ENCODE measurements at regions of chr12 and their contacts with region 1.

Region 1: DNA sequence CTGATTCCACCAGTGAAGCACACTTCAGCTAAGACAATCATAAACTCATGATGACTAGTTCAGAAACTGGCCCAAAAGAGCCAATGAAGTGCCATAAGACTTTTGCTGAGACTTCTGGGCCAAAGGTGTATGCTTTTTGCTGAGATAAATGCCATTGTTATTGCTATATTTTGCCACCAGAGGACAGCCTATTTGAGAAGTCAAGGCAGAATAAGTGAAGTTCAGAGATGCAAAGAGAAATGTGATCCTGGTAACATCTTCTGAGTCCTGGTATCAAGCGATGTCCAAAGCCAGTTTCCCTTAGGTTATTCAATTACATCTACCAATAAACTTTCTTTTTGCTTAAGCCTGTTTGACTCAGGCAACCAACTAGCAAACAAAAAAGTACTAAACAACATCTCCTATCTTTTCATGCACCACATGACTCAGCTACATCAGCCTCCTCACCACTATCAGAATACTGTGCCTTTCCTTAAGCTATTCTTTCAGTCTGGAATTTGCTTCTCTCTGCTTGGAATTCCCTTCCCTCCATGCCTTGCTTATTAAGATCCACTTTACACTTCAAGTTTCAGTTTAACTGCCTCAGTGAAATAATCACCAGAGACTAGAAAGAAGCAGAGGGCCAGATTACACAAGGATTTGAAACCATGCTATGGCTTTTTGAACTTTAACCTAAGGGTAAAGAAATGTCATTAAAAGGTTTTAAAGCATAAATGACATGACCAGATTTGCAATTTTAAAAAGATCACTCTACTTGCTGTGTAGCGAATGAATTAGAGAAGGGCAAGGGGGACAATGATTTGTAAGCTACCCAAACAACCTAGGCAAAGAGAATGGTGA is 14.0 kb downstream of the CRY1 start:
- DNase-seq: peak; percentile 20 to 49 (median 24)
- ATAC-seq: peak; percentile 88
- H3K4me3 ChIP-seq: no peak overlapping the region
- H3K27ac ChIP-seq: peak overlapping the region; percentile 38; the same call in 1 of the 3 replicates
- H3K4me1 ChIP-seq: peaks cover 4 to 15% of the 10 kb centered on the region in 2 experiments; a peak in 3 of 5 replicates
- H3K27me3 ChIP-seq: no peaks in the 10 kb centered on the region
- CTCF ChIP-seq: peak; percentile 60 to 69 (median 68)
- EP300 ChIP-seq: no peak
- POLR2A ChIP-seq: no peak
- RAD21 ChIP-seq: no peak; a peak in 2 of 4 replicates

Region 2: DNA sequence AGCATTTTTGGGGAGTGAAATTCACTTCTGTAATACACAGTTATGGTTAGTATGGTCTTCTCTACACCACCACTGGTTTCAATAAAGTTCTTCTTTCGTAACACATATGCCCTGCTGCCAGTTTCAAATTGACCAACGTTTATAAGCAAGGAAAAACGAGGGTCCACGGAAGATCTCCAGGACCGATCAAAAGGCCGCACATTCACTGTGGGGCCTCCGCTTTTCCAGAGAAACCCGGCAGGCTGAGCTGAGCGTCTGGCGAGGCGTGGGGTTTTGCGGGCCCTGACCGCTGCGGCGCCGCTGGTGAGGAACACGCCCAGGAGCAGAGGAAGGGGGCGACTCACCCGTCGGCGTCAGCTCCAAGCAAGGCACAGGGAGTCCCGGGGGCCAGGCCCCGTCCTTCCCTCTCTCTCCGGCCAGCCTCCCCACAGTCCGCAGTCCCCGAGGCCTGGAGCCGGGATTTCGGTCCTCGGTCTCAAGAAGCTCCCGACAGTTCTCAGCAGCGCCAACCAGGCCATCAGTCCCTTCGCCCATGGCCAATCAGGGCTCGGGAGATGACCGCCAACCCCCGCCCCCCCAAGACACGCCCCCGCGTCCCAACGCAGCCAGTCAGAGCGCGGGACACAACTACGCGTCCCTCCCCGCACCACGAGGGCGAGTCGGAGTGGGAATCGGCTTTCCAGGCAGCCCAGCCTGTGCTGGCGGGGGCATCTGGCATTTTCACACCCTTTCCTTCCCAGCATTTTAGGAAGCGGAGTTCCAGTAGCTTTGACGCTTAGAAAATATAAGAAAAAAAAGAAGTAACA is 92.6 kb before region 1 on chr12 and contains the start of gene MTERF2:
- CTCF ChIA-PET with region 1: no interaction called
- POLR2A ChIA-PET with region 1: no interaction called
- in situ Hi-C with region 1: no loop called
- intact Hi-C with region 1: loop called (anchors 5 kb)
- DNase-seq: peak; percentile 97 to 98 (median 98)
- ATAC-seq: peak; percentile 96
- H3K4me3 ChIP-seq: peak within 1 kb of the TSS; percentile 64
- H3K27ac ChIP-seq: peak within 1 kb of the TSS; percentile 85
- H3K4me1 ChIP-seq: peaks cover 16 to 25% of the 10 kb centered on the region in 2 experiments
- H3K27me3 ChIP-seq: no peaks in the 10 kb centered on the region
- CTCF ChIP-seq: no peak
- EP300 ChIP-seq: no peak
- POLR2A ChIP-seq: peak; percentile 85
- RAD21 ChIP-seq: 0 out of 4 replicates have a peak, but pooled peaks of 1 of the 2 experiments have one; percentile 7
- polyA plus RNA-seq, gene MTERF2: 10.0 to 11.6 TPM

Region 3: GRCh38 chr12:107093417-107094182 is 14.2 kb after region 1 on chr12 and contains the start of gene CRY1:
- CTCF ChIA-PET with region 1: no interaction called
- POLR2A ChIA-PET with region 1: interaction called, 11 read pairs
- in situ Hi-C with region 1: no loop called
- intact Hi-C with region 1: loop called (anchors 2 kb)
- DNase-seq: peak; percentile 95 to 97 (median 96)
- ATAC-seq: peak; percentile 95
- H3K4me3 ChIP-seq: peak within 1 kb of the TSS; percentile 70
- H3K27ac ChIP-seq: peak within 1 kb of the TSS; percentile 94
- H3K4me1 ChIP-seq: peaks cover 9 to 11% of the 10 kb centered on the region in 2 experiments; a peak in 4 of 5 replicates
- H3K27me3 ChIP-seq: no peaks in the 10 kb centered on the region
- CTCF ChIP-seq: no peak
- EP300 ChIP-seq: no peak
- POLR2A ChIP-seq: peak; percentile 88
- RAD21 ChIP-seq: no peak
- polyA plus RNA-seq, gene CRY1: 8.7 to 9.4 TPM

Region 4: GRCh38 chr12:107458163-107458562 is 378.8 kb after region 1 on chr12:
- CTCF ChIA-PET with region 1: no interaction called
- POLR2A ChIA-PET with region 1: no interaction called
- in situ Hi-C with region 1: no loop called
- intact Hi-C with region 1: no loop called
- DNase-seq: no peak
- ATAC-seq: no peak
- H3K4me3 ChIP-seq: no peak overlapping the region
- H3K27ac ChIP-seq: no peak overlapping the region
- H3K4me1 ChIP-seq: no peaks in the 10 kb centered on the region
- H3K27me3 ChIP-seq: peaks cover 0 to 13% of the 10 kb centered on the region in 2 experiments; a peak in 3 of 5 replicates
- CTCF ChIP-seq: no peak
- EP300 ChIP-seq: no peak
- POLR2A ChIP-seq: no peak
- RAD21 ChIP-seq: no peak

Measured in K562 (cell line).